ENCODE measurements at regions of chr1 and their contacts with region 1.

Region 1: DNA sequence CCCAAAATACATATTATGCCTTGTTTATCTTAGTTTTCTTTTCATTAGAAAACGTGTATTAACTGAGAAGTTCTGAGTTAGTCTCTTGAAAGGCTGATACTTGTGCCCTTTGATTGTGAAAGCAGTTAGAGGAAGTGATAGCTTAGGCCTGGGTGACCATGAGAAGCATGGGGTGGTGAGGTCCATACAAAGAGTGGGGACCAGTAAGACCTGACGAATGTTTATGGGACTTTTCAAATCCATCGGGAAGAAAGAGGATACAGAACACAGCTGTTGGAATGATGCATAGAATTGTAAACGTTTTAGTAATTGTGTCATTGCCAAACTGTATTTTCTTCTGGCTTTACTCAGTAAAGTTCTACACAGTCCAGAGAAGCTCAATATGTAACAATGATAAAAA is 259.8 kb downstream of the LMO4 start:
- DNase-seq: no peak
- H3K4me3 ChIP-seq: no peak overlapping the region
- CTCF ChIP-seq: no peak

Region 2: GRCh38 chr1:87379306-87379705 is 209.2 kb before region 1 on chr1:
- in situ Hi-C with region 1: no loop called
- DNase-seq: no peak
- H3K4me3 ChIP-seq: no peak overlapping the region
- CTCF ChIP-seq: no peak

Region 3: DNA sequence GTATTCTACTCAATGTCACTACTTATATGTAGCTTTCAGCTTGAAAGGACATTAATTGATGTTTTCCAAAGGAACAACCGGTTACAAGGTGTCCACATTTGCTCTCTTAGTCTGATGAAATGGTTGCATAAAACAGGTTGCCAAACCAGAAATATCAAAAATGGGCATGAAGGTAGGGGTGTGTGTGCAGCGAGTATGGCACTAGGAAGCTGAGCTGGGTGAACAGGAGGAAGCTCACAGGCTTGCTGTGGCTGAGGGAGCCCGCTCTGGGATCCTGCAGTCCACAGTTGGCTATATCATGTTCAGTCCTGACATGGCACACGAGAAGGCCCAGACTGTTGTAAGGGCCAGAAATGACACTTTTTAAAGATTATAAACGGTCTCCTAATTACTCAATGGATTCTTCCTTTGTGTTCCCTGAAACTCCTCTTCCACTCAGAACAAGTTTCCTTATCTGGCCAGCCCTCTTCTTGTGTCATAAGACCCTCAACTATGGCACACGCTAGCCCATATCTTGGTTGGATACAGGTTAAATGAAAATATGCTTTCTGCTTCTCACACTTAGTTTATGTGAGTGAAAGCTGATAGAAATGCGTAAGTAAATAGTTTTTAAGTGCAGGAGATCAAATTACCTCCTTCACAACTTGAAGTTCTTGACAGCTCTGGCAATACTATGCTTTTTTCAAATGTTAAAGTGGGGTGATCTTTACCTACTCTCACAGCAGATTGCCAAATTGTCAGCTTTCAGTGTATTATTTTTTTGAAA is 58.3 kb before region 1 on chr1:
- in situ Hi-C with region 1: no loop called
- DNase-seq: no peak
- H3K4me3 ChIP-seq: no peak overlapping the region
- CTCF ChIP-seq: no peak

Region 4: DNA sequence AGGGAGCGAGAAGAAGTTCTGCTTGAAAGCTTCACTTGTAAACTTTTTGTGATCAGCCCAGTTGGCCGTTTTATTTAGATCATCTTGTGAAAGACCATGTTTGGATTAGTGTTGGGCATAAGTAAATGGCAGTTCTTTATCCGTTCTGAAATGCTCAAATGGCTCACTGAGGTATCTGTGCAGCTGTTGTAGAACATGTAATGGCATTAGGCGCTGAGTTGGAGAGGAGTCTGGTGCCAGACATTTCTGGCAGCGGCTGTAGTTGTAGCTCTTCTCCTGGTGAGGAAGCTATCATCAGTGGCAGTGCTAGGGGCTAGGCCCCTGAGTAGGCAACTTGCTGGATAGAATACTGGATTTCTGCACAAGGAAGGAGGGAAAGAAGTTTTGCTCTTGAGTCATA is 61.8 kb after region 1 on chr1:
- in situ Hi-C with region 1: loop called (anchors 10 kb)
- DNase-seq: no peak
- H3K4me3 ChIP-seq: no peak overlapping the region
- CTCF ChIP-seq: no peak

Measured in astrocyte of the cerebellum (primary cell).